SK-N-SH (cell line): ENCODE measurements at regions of chr17 and their contacts with region 1.

Region 1: DNA sequence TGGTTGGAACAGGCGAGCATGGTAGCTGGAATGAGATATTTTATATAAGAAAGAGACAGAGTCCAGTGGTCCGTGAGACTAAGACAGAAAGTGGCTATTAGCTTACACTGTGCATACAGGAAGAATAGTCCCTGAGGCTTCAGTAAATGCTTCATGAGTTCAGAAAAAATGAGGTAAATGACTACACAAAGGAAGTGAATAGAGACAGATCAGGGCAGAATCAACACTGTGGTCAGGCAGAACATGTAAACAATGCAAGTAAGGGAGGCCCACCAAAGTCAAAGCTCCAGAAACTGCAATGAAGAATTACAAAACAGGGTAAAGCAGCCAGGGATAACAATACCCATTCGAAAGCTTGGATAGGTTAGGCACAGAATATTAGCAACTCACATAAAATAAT is 4.8 kb downstream of the ABCA10 start:
- DNase-seq: no peak
- H3K4me3 ChIP-seq: no peak overlapping the region
- H3K27ac ChIP-seq: no peak overlapping the region
- H3K4me1 ChIP-seq: no peaks in the 10 kb centered on the region
- H3K27me3 ChIP-seq: no peaks in the 10 kb centered on the region; the same call in 1 of the 2 replicates
- CTCF ChIP-seq: no peak
- EP300 ChIP-seq: no peak
- RAD21 ChIP-seq: no peak

Region 2: GRCh38 chr17:69207151-69207550 is 16.7 kb before region 1 on chr17:
- CTCF ChIA-PET with region 1: interaction called, 10 read pairs
- POLR2A ChIA-PET with region 1: no interaction called
- DNase-seq: no peak
- H3K4me3 ChIP-seq: no peak overlapping the region
- H3K27ac ChIP-seq: no peak overlapping the region
- H3K4me1 ChIP-seq: no peaks in the 10 kb centered on the region
- H3K27me3 ChIP-seq: no peaks in the 10 kb centered on the region; the same call in 1 of the 2 replicates
- CTCF ChIP-seq: no peak
- EP300 ChIP-seq: no peak
- RAD21 ChIP-seq: no peak